PC-9 (cell line): ENCODE measurements at regions of chr16 and their contacts with region 1.

Region 1: DNA sequence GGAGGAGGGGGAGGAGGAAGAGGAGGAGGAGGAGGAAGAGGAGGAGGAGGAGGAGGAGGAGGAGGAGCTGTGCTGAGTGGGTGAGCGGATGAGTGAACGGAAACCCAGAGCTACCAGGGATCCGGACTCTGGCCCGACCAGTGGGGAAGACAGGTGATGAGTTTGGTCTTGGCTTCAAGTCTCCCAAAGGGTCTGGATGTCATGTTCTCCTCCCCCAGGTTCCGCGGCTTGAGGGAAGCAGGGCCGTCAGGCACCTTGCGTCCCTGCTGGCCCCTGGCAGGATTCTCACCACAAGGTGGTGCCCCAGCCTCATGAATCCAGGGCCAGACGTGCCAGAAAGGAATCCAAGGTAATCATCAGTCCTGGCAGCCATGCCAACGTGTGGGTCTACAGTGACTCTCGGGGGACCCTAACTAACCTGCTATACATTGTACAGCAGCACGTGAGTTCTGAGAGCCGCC is 13.5 kb upstream of the ABAT start:
- DNase-seq: peak; percentile 46 to 55
- H3K4me3 ChIP-seq: no peak overlapping the region
- H3K27ac ChIP-seq: no peak overlapping the region
- H3K4me1 ChIP-seq: no peaks in the 10 kb centered on the region
- H3K27me3 ChIP-seq: no peaks in the 10 kb centered on the region
- CTCF ChIP-seq: peak; percentile 69

Region 2: DNA sequence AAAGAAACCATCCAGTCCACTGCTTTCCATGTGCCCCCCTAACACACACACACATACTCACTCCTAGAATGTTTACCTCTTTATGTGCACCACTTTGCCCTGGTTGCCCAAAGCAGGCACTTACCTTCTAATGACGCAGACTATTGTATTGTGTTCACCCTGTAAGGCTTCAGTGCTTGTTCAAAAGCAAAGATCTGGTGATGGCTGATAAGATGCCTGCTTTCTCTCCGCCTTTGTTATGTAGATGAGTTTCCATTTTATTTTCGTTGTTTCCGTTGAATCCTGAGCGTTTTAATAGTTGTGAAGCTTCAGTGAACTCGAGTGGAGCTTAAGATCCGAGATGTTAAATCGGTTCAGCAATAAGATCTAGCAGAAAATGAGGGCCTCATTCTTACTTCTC is 523.3 kb before region 1 on chr16:
- CTCF ChIA-PET with region 1: no interaction called
- POLR2A ChIA-PET with region 1: no interaction called
- intact Hi-C with region 1: no loop called
- DNase-seq: no peak
- H3K4me3 ChIP-seq: no peak overlapping the region
- H3K27ac ChIP-seq: no peak overlapping the region
- H3K4me1 ChIP-seq: no peaks in the 10 kb centered on the region
- H3K27me3 ChIP-seq: peaks cover 4% of the 10 kb centered on the region; the same call in 1 of the 2 replicates
- CTCF ChIP-seq: no peak

Region 3: DNA sequence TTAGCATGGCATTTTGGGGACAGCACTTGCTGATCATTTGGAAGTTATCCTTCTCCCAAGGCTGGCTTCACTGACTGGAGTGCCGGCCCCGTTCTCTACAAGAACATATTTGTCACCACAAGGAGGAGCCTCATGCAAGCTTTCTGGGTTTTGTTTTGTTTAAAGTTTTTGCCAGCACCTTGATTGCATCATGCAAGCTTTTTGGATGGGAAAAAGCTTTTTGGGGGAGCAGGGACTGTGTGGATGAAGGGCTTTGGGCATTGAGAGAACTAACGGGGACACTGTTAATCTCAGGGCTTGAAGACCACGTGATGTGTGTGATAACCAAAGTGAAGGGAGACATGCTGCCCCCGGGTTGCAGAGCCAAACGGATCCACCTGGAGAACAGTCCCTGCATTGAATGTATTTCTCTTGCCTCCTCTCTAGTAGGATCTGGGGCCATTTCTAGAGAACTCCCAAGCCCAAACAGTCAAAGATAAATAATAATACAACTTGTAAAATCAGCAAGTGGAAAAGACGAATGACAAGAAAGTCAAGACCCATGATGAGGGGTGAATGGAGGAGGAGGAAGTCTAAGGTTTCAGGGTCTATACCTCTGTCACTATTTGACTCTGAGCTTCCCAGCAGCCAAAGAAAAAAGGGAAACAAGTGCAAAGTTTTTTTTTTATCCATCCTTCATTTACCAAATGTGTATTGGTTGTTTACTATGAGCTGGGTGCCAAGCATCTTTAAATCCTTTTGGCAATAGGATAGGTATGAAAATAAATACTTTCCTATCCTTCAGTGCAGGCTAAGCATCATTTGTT is 87.7 kb before region 1 on chr16:
- CTCF ChIA-PET with region 1: no interaction called
- POLR2A ChIA-PET with region 1: no interaction called
- intact Hi-C with region 1: loop called (anchors 2 kb)
- DNase-seq: peak in 1 of 2 experiments; percentile 31
- H3K4me3 ChIP-seq: no peak overlapping the region
- H3K27ac ChIP-seq: no peak overlapping the region
- H3K4me1 ChIP-seq: no peaks in the 10 kb centered on the region
- H3K27me3 ChIP-seq: peaks cover 54% of the 10 kb centered on the region
- CTCF ChIP-seq: peak; percentile 67

Region 4: GRCh38 chr16:8878521-8878911 is 217.6 kb after region 1 on chr16:
- CTCF ChIA-PET with region 1: interaction called, 8 read pairs
- POLR2A ChIA-PET with region 1: no interaction called
- intact Hi-C with region 1: loop called (anchors 2 kb)
- DNase-seq: peak; percentile 70 to 81
- H3K4me3 ChIP-seq: no peak overlapping the region; the same call in 1 of the 2 replicates
- H3K27ac ChIP-seq: peak overlapping the region; percentile 76
- H3K4me1 ChIP-seq: peaks cover 23% of the 10 kb centered on the region
- H3K27me3 ChIP-seq: no peaks in the 10 kb centered on the region
- CTCF ChIP-seq: no peak